ENCODE measurements at regions of chr5 and their contacts with region 1.

Region 1: DNA sequence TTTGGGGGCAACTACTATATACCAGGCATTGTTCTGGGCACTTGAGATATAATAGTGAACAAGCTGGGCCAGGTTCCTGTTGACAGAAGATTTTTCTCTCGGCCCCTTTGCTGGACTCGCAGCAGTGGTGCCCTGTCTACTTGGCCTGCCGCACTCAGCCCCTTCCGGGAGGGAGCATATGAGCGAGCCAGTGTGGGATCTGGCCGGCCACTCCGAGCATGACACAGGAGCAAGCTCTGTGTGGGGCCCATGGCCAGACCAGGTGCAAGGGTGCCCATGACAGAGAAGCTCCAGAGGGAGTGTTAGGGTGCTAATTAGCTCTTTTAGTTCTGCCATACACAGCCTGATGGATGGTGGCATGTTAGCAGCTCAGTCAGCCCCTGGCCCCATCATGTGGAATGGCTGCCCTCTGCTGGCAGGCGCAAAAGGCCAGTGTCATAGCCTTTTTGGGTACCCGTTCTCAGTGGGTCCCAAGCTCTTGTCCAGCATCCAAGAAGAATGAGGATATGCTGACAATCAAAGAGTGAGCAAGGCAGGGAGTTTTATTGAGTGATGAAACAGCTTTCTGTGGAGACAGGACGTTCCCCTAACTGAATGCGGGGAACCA is 9.3 kb upstream of the KIF4B start:
- DNase-seq: peak; percentile 39
- H3K4me3 ChIP-seq: no peak overlapping the region
- H3K27ac ChIP-seq: no peak overlapping the region
- H3K4me1 ChIP-seq: peaks cover 6% of the 10 kb centered on the region
- H3K27me3 ChIP-seq: no peaks in the 10 kb centered on the region
- CTCF ChIP-seq: peak; percentile 69 to 90

Region 2: DNA sequence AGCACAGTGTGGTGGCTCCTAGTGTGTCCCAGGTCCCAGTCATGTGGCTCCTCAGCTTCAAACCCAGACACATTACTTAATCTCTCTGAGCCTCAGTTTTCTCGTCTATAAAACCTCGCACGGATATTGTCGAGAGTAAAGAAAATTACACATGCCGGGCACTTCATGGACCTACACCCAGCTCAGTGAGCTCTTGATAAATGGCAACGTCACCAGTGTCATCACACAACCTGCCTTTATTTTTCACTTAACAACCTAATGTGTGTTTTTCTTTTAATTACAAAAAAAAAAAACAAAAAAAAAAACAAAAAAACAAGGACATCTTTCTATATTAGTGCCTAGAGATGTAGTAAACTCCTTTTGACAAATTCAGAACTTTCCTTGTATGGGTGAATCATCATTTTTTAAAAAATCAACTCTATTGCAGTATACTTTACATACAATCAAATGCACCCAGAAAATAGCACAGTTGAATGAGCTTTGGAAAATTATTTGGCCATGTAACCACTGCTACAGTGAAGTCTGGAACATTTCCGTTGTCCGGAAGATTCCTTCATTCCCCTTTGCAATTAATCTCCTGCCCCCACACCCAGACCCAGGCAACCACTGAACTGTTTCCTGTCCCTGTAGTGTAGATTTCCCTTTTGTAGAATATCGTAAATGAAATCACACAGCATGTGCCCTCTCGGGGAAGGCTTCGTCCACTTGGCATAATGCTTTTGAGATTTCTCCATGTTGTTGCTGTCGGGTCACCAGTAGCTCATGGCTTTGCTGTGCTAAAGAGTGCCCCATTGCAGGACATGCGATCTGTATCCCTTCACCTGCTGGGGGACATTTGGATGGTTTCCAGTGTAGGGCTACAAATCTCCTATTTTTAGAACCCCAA is 349.5 kb before region 1 on chr5:
- CTCF ChIA-PET with region 1: interaction called, 4 read pairs
- dilution Hi-C with region 1: no loop called
- in situ Hi-C with region 1: loop called in 1 of 2 experiments (anchors 25 kb)
- intact Hi-C with region 1: loop called (anchors 1 kb)
- DNase-seq: no peak
- H3K4me3 ChIP-seq: no peak overlapping the region
- H3K27ac ChIP-seq: no peak overlapping the region
- H3K4me1 ChIP-seq: peaks cover 11% of the 10 kb centered on the region
- H3K27me3 ChIP-seq: no peaks in the 10 kb centered on the region
- CTCF ChIP-seq: no peak

Region 3: DNA sequence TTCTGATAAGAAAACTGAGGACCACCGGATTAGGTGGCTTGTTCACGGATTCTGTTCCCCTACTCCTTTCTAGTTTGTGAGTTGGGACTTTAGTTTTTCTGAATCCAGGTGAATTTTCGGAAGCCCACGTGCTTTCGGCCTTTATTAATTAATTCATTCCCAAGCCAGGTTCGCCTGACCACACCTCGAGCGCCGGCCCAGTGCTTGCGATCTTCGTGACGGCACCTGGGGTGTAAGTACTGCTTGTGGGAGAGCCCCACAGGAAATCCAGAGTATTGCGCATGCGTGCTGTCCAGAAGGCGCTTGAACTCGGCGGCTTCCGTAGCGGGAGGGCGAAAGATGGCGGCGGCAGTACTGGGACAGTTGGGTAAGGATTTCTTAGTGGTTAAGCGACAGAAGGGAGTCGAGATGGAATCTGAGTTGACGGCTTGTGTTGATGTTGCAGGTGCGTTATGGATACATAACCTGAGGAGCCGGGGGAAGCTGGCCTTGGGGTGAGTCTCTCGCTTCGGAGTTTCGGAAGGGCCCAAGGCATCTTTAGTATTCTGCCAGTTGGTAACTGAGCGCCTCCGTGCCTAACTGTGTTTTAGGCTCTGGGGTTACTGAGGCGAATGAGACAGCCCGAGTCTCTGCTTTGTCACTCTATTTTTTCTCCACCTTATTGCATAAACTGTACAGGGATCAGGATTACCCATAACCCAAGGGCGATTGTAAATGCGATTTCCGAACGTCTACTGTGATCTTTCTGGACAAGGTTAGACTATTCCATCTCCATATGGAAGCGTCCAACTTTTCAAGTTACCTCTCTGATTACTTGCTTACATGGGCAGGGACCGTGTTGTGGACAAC is 63.2 kb before region 1 on chr5 and contains the start of gene MRPL22:
- CTCF ChIA-PET with region 1: no interaction called
- dilution Hi-C with region 1: no loop called
- in situ Hi-C with region 1: no loop called
- intact Hi-C with region 1: loop called (anchors 1 kb)
- DNase-seq: peak; percentile 91
- H3K4me3 ChIP-seq: peak within 1 kb of the TSS; percentile 66 to 94 (median 84)
- H3K27ac ChIP-seq: peak within 1 kb of the TSS; percentile 81
- H3K4me1 ChIP-seq: peaks cover 22% of the 10 kb centered on the region
- H3K27me3 ChIP-seq: no peaks in the 10 kb centered on the region
- CTCF ChIP-seq: no peak
- total RNA-seq, gene MRPL22: 7.7 to 58.1 TPM

Region 4: GRCh38 chr5:154947778-154948177 is 56.5 kb before region 1 on chr5:
- CTCF ChIA-PET with region 1: no interaction called
- dilution Hi-C with region 1: no loop called
- in situ Hi-C with region 1: no loop called
- intact Hi-C with region 1: loop called (anchors 1 kb)
- DNase-seq: no peak
- H3K4me3 ChIP-seq: no peak overlapping the region
- H3K27ac ChIP-seq: no peak overlapping the region
- H3K4me1 ChIP-seq: no peaks in the 10 kb centered on the region
- H3K27me3 ChIP-seq: no peaks in the 10 kb centered on the region
- CTCF ChIP-seq: no peak

Region 5: GRCh38 chr5:154967421-154968024 is 36.7 kb before region 1 on chr5:
- CTCF ChIA-PET with region 1: interaction called, 14 read pairs
- dilution Hi-C with region 1: no loop called
- in situ Hi-C with region 1: no loop called
- intact Hi-C with region 1: loop called (anchors 1 kb)
- DNase-seq: no peak
- H3K4me3 ChIP-seq: no peak overlapping the region
- H3K27ac ChIP-seq: no peak overlapping the region
- H3K4me1 ChIP-seq: no peaks in the 10 kb centered on the region
- H3K27me3 ChIP-seq: no peaks in the 10 kb centered on the region
- CTCF ChIP-seq: peak; percentile 56 to 64

Region 6: DNA sequence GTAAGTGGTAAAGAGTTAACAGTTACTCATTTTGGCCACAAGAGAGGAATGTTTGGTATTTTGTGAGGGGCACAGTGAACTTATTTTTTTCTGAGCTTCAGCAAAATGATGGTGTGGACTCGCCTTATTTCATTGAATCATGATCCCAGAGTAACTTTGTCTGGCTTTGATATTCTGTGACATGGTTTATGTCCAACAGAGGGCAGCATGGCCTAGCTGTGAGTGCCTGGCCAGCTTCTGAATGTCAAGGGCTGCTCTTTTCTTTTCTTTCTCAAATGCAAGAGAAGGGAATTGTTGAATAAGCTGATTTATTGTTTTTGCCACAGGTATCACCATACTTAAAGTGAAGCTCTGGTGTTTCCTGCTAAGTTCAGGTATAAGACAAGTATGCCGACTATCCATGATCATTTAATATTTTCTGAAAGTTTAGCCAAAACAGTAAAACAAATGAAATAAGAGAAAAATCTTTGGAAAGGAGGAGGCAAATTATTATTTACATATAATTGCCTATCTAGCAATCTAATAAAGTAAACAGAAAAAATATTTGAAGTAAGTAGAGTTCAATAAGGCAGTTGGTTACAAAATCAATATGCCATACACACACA is 31.7 kb before region 1 on chr5:
- CTCF ChIA-PET with region 1: interaction called, 14 read pairs
- dilution Hi-C with region 1: no loop called
- in situ Hi-C with region 1: no loop called
- intact Hi-C with region 1: loop called (anchors 1 kb)
- DNase-seq: peak; percentile 34
- H3K4me3 ChIP-seq: no peak overlapping the region
- H3K27ac ChIP-seq: no peak overlapping the region
- H3K4me1 ChIP-seq: no peaks in the 10 kb centered on the region
- H3K27me3 ChIP-seq: no peaks in the 10 kb centered on the region
- CTCF ChIP-seq: peak; percentile 64 to 80

Region 7: DNA sequence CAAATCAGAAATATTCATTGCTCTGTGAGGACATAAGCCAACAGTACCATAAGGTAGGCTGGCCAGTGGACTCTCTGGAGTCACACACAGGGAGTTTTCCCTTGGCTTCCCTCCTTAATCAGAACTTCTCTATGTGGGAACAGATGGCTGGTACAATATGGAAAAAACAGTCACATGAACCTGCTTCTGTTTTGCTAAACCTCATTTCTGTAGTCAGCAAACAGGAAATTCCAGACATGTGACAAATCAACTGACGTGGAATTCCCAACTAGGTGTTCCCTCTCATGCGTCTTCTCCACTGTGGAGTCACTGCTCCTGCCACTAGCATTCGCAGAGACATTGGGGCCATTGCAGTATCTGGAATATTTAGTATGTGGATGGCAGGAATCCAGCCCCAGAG is 626.9 kb after region 1 on chr5:
- CTCF ChIA-PET with region 1: no interaction called
- dilution Hi-C with region 1: no loop called
- in situ Hi-C with region 1: no loop called
- intact Hi-C with region 1: no loop called
- DNase-seq: peak; percentile 87
- H3K4me3 ChIP-seq: no peak overlapping the region
- H3K27ac ChIP-seq: peak overlapping the region; percentile 28
- H3K4me1 ChIP-seq: peaks cover 11% of the 10 kb centered on the region
- H3K27me3 ChIP-seq: no peaks in the 10 kb centered on the region
- CTCF ChIP-seq: no peak

Measured in mammary epithelial cell (primary cell).